ENCODE measurements at regions of chr7 and their contacts with region 1.

Region 1: DNA sequence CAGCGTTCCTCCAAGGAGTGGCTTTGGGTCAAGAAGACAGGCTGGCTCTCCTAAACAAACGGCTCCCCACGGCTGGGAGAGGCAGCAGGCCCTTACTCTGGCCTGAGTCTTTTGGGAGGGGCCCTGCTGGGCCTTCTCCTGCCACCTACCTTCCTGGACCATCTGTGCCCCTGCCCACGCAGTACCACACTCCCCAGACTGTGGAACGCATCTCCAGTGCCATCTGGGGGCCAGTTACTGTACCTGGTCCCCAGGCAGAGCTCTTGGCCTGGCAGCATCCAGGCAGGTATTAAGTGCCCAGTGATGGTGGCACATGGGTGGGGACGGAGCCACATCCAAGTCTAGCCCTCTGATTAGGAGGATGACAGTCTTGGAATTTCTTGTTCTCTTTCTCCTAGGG is 14.4 kb downstream of the ALKBH4 start:
- DNase-seq: peak; percentile 71
- ATAC-seq: peak; percentile 91
- H3K4me3 Mint-ChIP-seq: no peak overlapping the region
- H3K27ac Mint-ChIP-seq: no peak overlapping the region
- H3K4me1 Mint-ChIP-seq: no peaks in the 10 kb centered on the region
- H3K27me3 Mint-ChIP-seq: no peaks in the 10 kb centered on the region

Region 2: GRCh38 chr7:102140952-102141370 is 309.3 kb before region 1 on chr7:
- CTCF ChIA-PET with region 1: no interaction called
- POLR2A ChIA-PET with region 1: no interaction called
- intact Hi-C with region 1: no loop called
- DNase-seq: peak; percentile 17
- ATAC-seq: peak; percentile 36
- H3K4me3 Mint-ChIP-seq: no peak overlapping the region
- H3K27ac Mint-ChIP-seq: peak overlapping the region; percentile 21
- H3K4me1 Mint-ChIP-seq: peaks cover 8% of the 10 kb centered on the region
- H3K27me3 Mint-ChIP-seq: no peaks in the 10 kb centered on the region

Region 3: DNA sequence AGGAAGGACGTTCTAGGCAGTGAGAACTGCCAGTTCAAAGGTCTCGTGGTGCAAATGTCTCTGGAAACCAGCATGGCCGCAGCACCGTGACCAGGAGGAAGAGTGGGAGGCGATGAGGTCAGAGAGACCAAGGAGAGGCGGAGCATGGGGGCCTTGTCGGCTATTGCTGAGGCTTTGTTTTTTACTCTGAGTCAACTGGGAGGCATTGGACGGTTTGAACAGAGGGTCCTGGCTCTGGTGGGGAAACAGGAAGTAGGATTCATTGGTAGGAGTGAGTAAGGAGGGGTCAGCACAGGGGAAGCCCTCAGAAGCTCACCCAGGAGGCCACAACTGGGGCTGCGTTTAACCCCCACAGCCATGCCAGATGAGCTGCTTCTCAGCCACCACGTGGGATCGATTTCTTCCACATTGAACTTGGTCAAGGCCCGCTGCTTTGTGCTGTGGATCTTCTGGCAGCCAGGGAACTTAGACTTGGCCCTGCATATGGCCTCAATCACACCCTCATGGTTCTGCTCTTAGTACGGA is 185.8 kb before region 1 on chr7:
- CTCF ChIA-PET with region 1: no interaction called
- POLR2A ChIA-PET with region 1: no interaction called
- intact Hi-C with region 1: no loop called
- DNase-seq: no peak
- ATAC-seq: no peak
- H3K4me3 Mint-ChIP-seq: no peak overlapping the region
- H3K27ac Mint-ChIP-seq: no peak overlapping the region
- H3K4me1 Mint-ChIP-seq: no peaks in the 10 kb centered on the region
- H3K27me3 Mint-ChIP-seq: no peaks in the 10 kb centered on the region

Region 4: GRCh38 chr7:102279537-102280400 is 170.5 kb before region 1 on chr7:
- CTCF ChIA-PET with region 1: no interaction called
- POLR2A ChIA-PET with region 1: no interaction called
- intact Hi-C with region 1: loop called in 1 of 2 experiments (anchors 1 kb)
- DNase-seq: peak; percentile 79
- ATAC-seq: peak; percentile 92
- H3K4me3 Mint-ChIP-seq: no peak overlapping the region
- H3K27ac Mint-ChIP-seq: no peak overlapping the region
- H3K4me1 Mint-ChIP-seq: peaks cover 12% of the 10 kb centered on the region
- H3K27me3 Mint-ChIP-seq: peaks cover under 1% of the 10 kb centered on the region

Region 5: DNA sequence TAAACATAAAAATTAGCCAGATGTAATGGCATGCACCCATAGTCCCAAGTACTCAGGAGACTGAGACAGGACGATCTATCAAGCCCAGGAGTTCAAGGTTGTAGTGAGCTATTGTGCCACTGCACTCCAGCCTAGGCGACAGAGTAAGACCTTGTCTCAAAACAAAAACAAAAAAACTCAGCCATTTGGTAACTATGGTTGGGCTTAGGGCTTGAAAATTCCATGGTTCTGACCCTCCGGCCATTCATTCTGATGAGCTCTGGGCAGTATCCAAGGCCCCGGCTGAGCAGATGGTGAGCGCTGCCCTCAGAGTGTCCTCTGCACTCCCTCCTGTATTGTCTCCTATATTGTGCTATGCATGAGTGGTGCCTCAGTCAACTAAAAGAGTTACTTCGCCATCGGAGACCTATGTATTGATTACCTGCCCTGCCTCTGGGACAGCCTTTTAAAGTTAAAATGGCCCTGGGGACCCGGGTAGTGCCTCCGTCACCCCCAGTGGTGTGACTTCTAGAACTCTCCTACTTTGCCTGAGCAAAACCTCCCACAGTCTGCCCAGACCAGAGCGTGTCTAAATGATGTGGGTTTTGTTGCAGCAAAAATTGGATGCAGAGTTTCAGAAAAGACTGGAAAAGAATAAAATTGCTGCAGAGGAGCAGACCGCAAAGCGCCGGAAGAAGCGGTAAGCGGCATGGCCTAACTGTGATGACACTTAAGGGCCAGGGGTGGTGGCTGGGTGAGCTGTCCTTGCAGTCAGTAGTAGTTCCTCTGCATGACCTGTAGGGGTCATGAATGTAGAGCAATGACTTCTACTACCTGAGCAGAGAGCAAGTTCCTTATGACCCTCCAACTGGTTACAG is 46.0 kb before region 1 on chr7:
- CTCF ChIA-PET with region 1: interaction called, 6 read pairs
- POLR2A ChIA-PET with region 1: no interaction called
- intact Hi-C with region 1: loop called (anchors 1 kb)
- DNase-seq: peak; percentile 63
- ATAC-seq: peak; percentile 98
- H3K4me3 Mint-ChIP-seq: no peak overlapping the region
- H3K27ac Mint-ChIP-seq: peak overlapping the region; percentile 8
- H3K4me1 Mint-ChIP-seq: peaks cover 3% of the 10 kb centered on the region
- H3K27me3 Mint-ChIP-seq: no peaks in the 10 kb centered on the region

Region 6: DNA sequence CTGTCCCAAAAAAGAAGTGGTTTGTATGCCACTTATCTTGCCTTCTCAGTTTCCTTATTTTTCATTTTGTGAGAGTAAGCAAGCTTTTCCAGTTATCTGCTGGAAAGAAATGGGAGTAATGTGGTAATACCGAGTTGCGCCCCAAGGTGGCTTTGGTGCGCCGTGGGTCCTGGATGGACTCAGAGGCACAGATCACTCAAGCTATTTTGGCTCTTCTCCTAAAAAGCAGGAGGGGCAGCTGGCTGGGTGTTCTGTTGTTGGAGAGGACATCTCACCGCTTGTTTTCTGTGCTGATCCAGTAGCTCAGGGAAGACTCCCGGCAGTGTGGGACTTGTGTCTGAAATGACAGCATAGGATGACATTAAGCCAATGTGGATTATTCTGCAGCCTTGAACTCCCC is 37.7 kb before region 1 on chr7:
- CTCF ChIA-PET with region 1: interaction called, 7 read pairs
- POLR2A ChIA-PET with region 1: no interaction called
- intact Hi-C with region 1: loop called in 1 of 2 experiments (anchors 1 kb)
- DNase-seq: peak; percentile 57
- ATAC-seq: no peak
- H3K4me3 Mint-ChIP-seq: no peak overlapping the region
- H3K27ac Mint-ChIP-seq: no peak overlapping the region
- H3K4me1 Mint-ChIP-seq: peaks cover 33% of the 10 kb centered on the region
- H3K27me3 Mint-ChIP-seq: no peaks in the 10 kb centered on the region